ENCODE measurements at regions of chr2 and their contacts with region 1.

Region 1: GRCh38 chr2:173205375-173205774 is 129.7 kb downstream of the MAP3K20 start:
- DNase-seq: no peak
- ATAC-seq: peak in 3 of 4 donors; percentile 32 to 80 (median 61)
- H3K4me3 ChIP-seq: no peak overlapping the region
- H3K27ac ChIP-seq: no peak overlapping the region
- H3K4me1 ChIP-seq: peaks cover 0 to 2% (median 0%) of the 10 kb centered on the region in 3 donors
- H3K27me3 ChIP-seq: no peaks in the 10 kb centered on the region
- CTCF ChIP-seq: no peak

Region 2: GRCh38 chr2:173033084-173033483 is 172.3 kb before region 1 on chr2:
- intact Hi-C with region 1: loop called in 2 of 3 experiments (anchors 5 to 10 kb)
- DNase-seq: no peak
- ATAC-seq: no peak
- H3K4me3 ChIP-seq: no peak overlapping the region
- H3K27ac ChIP-seq: no peak overlapping the region
- H3K4me1 ChIP-seq: peaks cover 14 to 25% (median 15%) of the 10 kb centered on the region in 3 donors
- H3K27me3 ChIP-seq: no peaks in the 10 kb centered on the region
- CTCF ChIP-seq: no peak

Region 3: GRCh38 chr2:173339807-173340206 is 134.4 kb after region 1 on chr2:
- intact Hi-C with region 1: no loop called
- DNase-seq: no peak
- ATAC-seq: no peak
- H3K4me3 ChIP-seq: no peak overlapping the region
- H3K27ac ChIP-seq: no peak overlapping the region
- H3K4me1 ChIP-seq: no peaks in the 10 kb centered on the region
- H3K27me3 ChIP-seq: no peaks in the 10 kb centered on the region
- CTCF ChIP-seq: no peak

Measured in pancreas (tissue), 10 donors.